ENCODE measurements at regions of chr15 and their contacts with region 1.

Region 1: DNA sequence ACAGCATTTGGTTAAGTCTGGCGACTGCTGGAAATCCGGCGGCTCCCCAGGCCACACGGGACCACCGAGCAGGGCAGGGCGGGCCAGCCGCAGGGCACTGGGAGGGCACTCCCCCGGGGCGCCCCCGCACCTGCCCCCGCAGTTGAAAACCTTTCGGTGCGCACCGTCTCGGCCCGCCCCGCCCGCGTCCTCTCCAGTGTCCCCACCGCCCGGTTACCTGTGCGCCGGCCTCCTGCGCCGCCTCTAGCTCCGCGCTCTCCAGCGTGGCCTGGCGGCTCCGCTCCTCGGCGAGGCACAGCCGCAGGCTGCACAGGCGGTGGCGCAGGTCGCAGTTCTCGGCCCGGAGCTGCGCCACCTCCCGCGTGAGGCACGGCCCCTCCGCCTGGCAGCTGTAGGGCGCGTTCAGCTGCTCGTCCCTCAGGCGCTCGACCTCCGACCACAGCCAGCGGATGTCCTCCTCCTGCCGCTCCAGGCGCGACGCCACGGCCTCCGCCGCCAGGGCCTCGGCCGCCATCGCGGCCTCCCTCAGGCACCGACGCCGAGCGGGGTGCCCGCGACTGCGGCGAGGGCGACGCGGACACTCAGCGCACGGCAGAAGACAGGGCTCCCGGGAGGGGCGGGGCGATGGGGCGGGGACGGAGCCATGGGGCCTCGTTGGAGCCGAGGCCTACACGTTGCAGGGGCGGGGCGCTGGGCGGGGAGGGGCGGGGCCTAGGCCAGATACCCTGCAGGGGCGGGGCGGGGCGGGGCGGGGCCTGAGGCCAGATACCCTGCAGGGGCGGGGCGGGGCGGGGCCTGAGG is at the start of gene TARS3:
- DNase-seq: peak; percentile 95
- H3K4me3 Mint-ChIP-seq: peak within 1 kb of the TSS; percentile 85
- H3K27ac Mint-ChIP-seq: peak within 1 kb of the TSS; percentile 94
- H3K4me1 Mint-ChIP-seq: peaks cover 13% of the 10 kb centered on the region
- H3K27me3 Mint-ChIP-seq: no peaks in the 10 kb centered on the region
- total RNA-seq, gene TARS3: 10.3 to 12.3 TPM

Region 2: GRCh38 chr15:101652098-101652782 is 71.8 kb before region 1 on chr15 and contains the start of gene TM2D3:
- CTCF ChIA-PET with region 1: interaction called, 9 read pairs
- POLR2A ChIA-PET with region 1: interaction called, 12 read pairs
- DNase-seq: peak; percentile 96
- H3K4me3 Mint-ChIP-seq: peak within 1 kb of the TSS; percentile 91
- H3K27ac Mint-ChIP-seq: peak within 1 kb of the TSS; percentile 97
- H3K4me1 Mint-ChIP-seq: peaks cover 43% of the 10 kb centered on the region
- H3K27me3 Mint-ChIP-seq: no peaks in the 10 kb centered on the region
- total RNA-seq, gene TM2D3: 41.8 to 43.8 TPM

Region 3: GRCh38 chr15:101698291-101698690 is 25.8 kb before region 1 on chr15:
- CTCF ChIA-PET with region 1: interaction called, 8 read pairs
- POLR2A ChIA-PET with region 1: interaction called, 11 read pairs
- DNase-seq: no peak
- H3K4me3 Mint-ChIP-seq: no peak overlapping the region
- H3K27ac Mint-ChIP-seq: no peak overlapping the region
- H3K4me1 Mint-ChIP-seq: peaks cover 28% of the 10 kb centered on the region
- H3K27me3 Mint-ChIP-seq: no peaks in the 10 kb centered on the region